ENCODE measurements at regions of chr2 and their contacts with region 1.

Region 1: GRCh38 chr2:20438334-20439192 is 8.3 kb upstream of the RHOB start:
- DNase-seq: peak in 1 of 2 donors; percentile 88
- H3K4me3 ChIP-seq: peak overlapping the region; percentile 1 to 43
- H3K27ac ChIP-seq: peak overlapping the region; percentile 84 to 89
- H3K4me1 ChIP-seq: peaks cover 7 to 22% of the 10 kb centered on the region in 2 donors
- H3K27me3 ChIP-seq: no peaks in the 10 kb centered on the region
- CTCF ChIP-seq: no peak

Region 2: GRCh38 chr2:20378792-20379519 is 59.6 kb before region 1 on chr2:
- intact Hi-C with region 1: loop called (anchors 5 kb)
- DNase-seq: peak; percentile 44 to 92
- H3K4me3 ChIP-seq: no peak overlapping the region
- H3K27ac ChIP-seq: peak overlapping the region; percentile 4 to 54
- H3K4me1 ChIP-seq: peaks cover 0 to 6% of the 10 kb centered on the region in 2 donors
- H3K27me3 ChIP-seq: no peaks in the 10 kb centered on the region
- CTCF ChIP-seq: peak; percentile 75 to 93 (median 80)

Region 3: GRCh38 chr2:21083482-21083881 is 644.9 kb after region 1 on chr2:
- intact Hi-C with region 1: no loop called
- DNase-seq: no peak
- H3K4me3 ChIP-seq: no peak overlapping the region
- H3K27ac ChIP-seq: no peak overlapping the region
- H3K4me1 ChIP-seq: no peaks in the 10 kb centered on the region
- H3K27me3 ChIP-seq: no peaks in the 10 kb centered on the region
- CTCF ChIP-seq: no peak

Measured in ascending aorta (tissue), 2 donors.